Activated CD4-positive, alpha-beta T cell treated with anti-CD3 and anti-CD28 coated beads, Interleukin-2, amount 10 ng/mL, durations not matched to agents 7 days and 5 days (primary cell): ENCODE measurements at regions of chr1 and their contacts with region 1.

Region 1: GRCh38 chr1:117093870-117094621 is 27.5 kb downstream of the TRIM45 start:
- DNase-seq: peak; percentile 57
- H3K4me3 Mint-ChIP-seq: no peak overlapping the region
- H3K27ac Mint-ChIP-seq: peak overlapping the region; percentile 33
- H3K4me1 Mint-ChIP-seq: peaks cover 23% of the 10 kb centered on the region
- H3K27me3 Mint-ChIP-seq: no peaks in the 10 kb centered on the region

Region 2: DNA sequence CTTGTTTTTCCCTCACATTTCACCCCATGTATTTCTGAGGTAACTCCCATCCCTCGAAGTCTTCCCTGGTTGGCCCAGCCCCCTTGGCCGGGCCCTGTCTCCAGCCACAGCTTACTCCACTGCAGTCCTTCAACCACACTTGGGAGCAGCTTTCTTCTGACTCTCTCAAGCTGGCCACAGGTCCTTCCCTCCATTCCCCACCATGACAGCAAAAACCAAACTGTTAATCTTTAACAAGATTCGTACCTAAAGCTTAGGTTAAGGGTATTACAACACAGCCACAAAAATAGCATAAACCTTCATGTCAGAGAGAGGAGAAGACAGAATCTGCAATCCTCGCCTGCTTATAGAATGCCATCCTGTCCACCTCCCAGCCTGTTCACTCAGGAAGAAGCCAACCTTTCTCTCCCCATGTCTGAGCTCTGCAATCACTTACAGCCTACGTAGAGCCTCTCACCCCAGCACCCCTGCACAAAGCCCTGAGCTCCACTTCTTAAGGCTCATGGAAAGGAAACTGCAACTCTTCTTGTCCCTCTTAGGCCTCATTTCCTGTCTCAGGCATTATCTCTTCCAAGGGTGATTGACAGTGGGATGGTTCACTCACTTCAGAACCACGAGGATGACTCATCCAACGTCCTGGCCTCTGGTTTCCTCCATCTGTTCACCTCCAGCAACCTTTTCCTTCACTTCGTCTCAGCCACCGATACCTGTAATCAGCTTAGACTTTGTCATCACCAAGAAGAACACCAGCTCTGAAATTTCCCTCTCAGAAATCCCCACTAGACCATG is 267.0 kb before region 1 on chr1:
- CTCF ChIA-PET with region 1: no interaction called
- POLR2A ChIA-PET with region 1: no interaction called
- DNase-seq: peak; percentile 72
- H3K4me3 Mint-ChIP-seq: peak overlapping the region; percentile 31
- H3K27ac Mint-ChIP-seq: peak overlapping the region; percentile 91
- H3K4me1 Mint-ChIP-seq: peaks cover 50% of the 10 kb centered on the region
- H3K27me3 Mint-ChIP-seq: no peaks in the 10 kb centered on the region

Region 3: DNA sequence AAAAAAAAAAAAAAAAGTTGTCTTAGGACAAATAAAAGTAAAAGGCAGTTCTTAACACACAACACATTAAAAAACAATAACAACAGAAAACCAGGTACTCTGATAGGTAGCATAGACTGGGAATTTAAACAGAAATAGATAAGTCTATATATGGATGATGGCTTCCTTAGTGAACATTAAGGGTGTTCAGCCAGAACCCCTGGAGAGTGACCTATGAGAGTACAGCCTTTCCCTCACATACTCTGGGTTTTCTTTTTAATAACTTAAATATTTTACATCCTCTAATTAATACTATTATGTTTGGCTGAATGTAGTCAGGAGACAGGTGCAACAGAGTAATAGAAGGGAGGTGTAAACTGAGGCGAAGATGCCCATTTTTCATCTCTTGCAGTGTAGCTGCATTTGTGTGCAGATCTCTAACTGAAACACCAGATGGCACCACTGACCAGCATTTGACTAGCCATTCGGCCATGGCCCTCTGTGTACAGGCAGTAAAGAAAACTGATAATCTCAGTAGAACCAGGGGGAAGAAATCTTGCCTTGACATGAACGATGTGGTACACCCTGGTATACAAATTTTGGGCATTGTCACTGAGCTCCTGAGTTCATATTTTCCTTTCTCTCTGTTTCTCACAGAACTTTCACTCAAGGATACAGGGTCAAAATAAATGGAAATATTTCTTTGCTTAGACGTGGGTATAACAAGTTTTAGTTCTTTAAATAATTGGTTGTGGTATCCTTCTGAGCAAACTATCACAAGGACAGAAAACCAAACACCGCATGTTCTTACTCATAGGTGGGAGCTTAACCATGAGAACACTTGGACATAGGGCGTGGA is 26.3 kb before region 1 on chr1:
- CTCF ChIA-PET with region 1: interaction called, 32 read pairs
- POLR2A ChIA-PET with region 1: no interaction called
- DNase-seq: peak; percentile 49
- H3K4me3 Mint-ChIP-seq: no peak overlapping the region
- H3K27ac Mint-ChIP-seq: no peak overlapping the region
- H3K4me1 Mint-ChIP-seq: peaks cover 44% of the 10 kb centered on the region
- H3K27me3 Mint-ChIP-seq: no peaks in the 10 kb centered on the region

Region 4: GRCh38 chr1:117106478-117106877 is 12.4 kb after region 1 on chr1:
- CTCF ChIA-PET with region 1: interaction called, 16 read pairs
- POLR2A ChIA-PET with region 1: no interaction called
- DNase-seq: no peak
- H3K4me3 Mint-ChIP-seq: no peak overlapping the region
- H3K27ac Mint-ChIP-seq: no peak overlapping the region
- H3K4me1 Mint-ChIP-seq: peaks cover 5% of the 10 kb centered on the region
- H3K27me3 Mint-ChIP-seq: no peaks in the 10 kb centered on the region